CD8-positive, alpha-beta memory T cell (primary cell): ENCODE measurements at regions of chr1 and their contacts with region 1.

Region 1: DNA sequence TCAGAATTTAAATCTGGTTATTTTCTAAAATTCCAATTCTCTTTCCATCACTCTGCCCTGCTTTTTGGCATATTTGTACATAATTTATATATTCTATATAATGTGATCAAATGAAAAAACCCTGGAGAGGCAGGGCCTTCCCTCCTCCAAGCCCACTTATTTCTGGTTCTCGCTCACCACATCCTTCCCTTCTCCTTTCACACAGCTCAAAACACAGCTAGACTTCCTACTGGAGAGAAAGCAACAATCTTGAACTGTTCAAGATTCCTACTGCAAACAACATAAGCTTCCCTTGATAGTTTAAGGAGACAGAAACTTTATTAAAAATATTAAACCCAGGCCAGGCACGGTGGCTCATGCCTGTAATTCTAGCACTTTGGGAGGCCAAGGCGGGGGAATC is 7.6 kb upstream of the AIM2 start:
- DNase-seq: no peak
- H3K4me3 ChIP-seq: no peak overlapping the region
- H3K4me3 Mint-ChIP-seq: no peak overlapping the region
- H3K27ac ChIP-seq: no peak overlapping the region
- H3K27ac Mint-ChIP-seq: no peak overlapping the region
- H3K4me1 ChIP-seq: no peaks in the 10 kb centered on the region
- H3K4me1 Mint-ChIP-seq: peaks cover 0 to 2% (median 0%) of the 10 kb centered on the region in 3 donors
- H3K27me3 ChIP-seq: no peaks in the 10 kb centered on the region
- H3K27me3 Mint-ChIP-seq: no peaks in the 10 kb centered on the region

Region 2: DNA sequence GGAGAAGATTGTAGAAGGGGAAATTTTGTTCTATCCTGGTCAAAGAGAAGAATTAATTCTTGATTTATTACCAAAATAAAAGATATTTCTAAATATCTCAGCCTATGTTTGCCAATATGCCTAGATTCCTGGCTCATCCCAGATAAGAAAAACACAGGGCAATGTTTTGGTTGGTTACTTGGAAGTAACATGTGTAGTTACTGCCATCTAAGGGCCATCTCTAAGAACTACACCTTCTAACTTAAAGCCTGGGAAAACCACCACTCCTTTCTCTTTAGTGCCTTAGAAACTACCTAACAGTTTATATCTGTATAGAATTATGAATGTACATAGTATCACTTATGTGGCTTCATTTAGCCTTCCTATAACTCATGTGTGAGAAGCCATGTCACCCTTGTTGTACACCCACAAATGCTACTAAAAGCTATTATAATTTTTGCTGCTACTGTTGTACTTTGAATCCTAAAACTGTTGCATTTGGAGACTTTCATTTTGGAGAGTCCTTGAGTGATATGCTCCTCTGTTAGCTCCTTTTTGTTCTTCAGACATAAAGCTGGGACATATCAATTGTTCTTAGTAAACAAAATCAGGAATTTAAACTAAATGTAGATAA is 12.1 kb before region 1 on chr1:
- CTCF ChIA-PET with region 1: interaction called, 14 read pairs
- POLR2A ChIA-PET with region 1: no interaction called
- DNase-seq: peak in 2 of 5 donors; percentile 19 to 31
- H3K4me3 ChIP-seq: no peak overlapping the region
- H3K4me3 Mint-ChIP-seq: peak overlapping the region in 1 of 7 donors; percentile 14
- H3K27ac ChIP-seq: no peak overlapping the region
- H3K27ac Mint-ChIP-seq: peak overlapping the region in 3 of 8 donors; percentile 6 to 72 (median 58)
- H3K4me1 ChIP-seq: peaks cover 37% of the 10 kb centered on the region
- H3K4me1 Mint-ChIP-seq: peaks cover 42 to 66% (median 59%) of the 10 kb centered on the region in 3 donors
- H3K27me3 ChIP-seq: no peaks in the 10 kb centered on the region
- H3K27me3 Mint-ChIP-seq: no peaks in the 10 kb centered on the region